Activated B cell treated with CpG ODN at 0.5 μM for 24 hours (primary cell): ENCODE measurements at regions of chr6 and their contacts with region 1.

Region 1: GRCh38 chr6:131182991-131183425 is 47.7 kb downstream of the AKAP7 start:
- DNase-seq: no peak
- ATAC-seq: peak; percentile 25
- H3K4me3 Mint-ChIP-seq: peak overlapping the region; percentile 33
- H3K27ac Mint-ChIP-seq: no peak overlapping the region
- H3K4me1 Mint-ChIP-seq: peaks cover 6% of the 10 kb centered on the region
- H3K27me3 Mint-ChIP-seq: no peaks in the 10 kb centered on the region
- CTCF ChIP-seq: no peak

Region 2: GRCh38 chr6:131013495-131013894 is 169.5 kb before region 1 on chr6:
- CTCF ChIA-PET with region 1: no interaction called
- POLR2A ChIA-PET with region 1: no interaction called
- intact Hi-C with region 1: no loop called
- DNase-seq: no peak
- ATAC-seq: no peak
- H3K4me3 Mint-ChIP-seq: no peak overlapping the region
- H3K27ac Mint-ChIP-seq: no peak overlapping the region
- H3K4me1 Mint-ChIP-seq: peaks cover 18% of the 10 kb centered on the region
- H3K27me3 Mint-ChIP-seq: no peaks in the 10 kb centered on the region
- CTCF ChIP-seq: no peak

Region 3: DNA sequence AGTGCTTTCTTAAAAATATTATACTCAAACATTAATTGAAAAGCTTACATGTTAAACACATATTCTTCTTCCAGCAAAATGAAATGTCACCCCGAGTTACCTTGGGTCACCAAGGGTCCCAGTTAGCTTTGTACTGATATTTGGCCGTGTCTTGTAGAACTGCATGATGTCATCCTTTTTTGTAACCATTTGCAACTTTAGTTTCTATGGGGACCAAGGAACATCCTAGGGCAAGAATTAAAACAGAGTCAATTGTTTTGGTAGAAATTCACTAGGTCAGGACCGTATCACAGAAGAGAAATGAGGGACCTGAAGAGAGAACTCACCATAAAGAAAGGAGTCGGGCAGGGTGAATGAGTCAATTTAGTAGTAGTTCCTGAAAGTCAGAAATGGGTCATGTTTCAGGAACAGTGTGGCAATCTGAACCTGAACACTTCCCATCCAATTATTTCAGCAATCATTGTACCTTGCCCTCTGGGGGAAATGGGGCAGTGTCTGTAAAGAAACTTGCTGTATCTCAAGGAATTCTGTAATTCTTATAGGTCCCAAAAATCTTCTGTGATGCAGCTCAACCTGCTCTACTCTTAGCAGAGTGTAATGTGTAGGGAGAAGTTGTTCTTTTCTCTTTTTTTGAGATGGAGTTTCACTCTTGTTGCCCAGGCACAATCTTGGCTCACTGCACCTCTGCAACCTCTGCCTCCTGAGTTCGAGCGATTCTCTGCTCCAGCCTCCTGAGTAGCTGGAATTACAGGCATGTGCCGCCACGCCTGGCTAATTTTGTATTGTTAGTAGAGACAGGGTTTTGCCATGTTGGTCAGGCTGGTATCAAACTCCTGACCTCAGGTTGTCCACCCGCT is 53.1 kb before region 1 on chr6:
- CTCF ChIA-PET with region 1: no interaction called
- POLR2A ChIA-PET with region 1: no interaction called
- intact Hi-C with region 1: no loop called
- DNase-seq: no peak
- ATAC-seq: no peak
- H3K4me3 Mint-ChIP-seq: no peak overlapping the region
- H3K27ac Mint-ChIP-seq: no peak overlapping the region
- H3K4me1 Mint-ChIP-seq: peaks cover 5% of the 10 kb centered on the region
- H3K27me3 Mint-ChIP-seq: no peaks in the 10 kb centered on the region
- CTCF ChIP-seq: no peak

Region 4: GRCh38 chr6:131292145-131292938 is 109.3 kb after region 1 on chr6:
- CTCF ChIA-PET with region 1: no interaction called
- POLR2A ChIA-PET with region 1: no interaction called
- intact Hi-C with region 1: no loop called
- DNase-seq: no peak
- ATAC-seq: no peak
- H3K4me3 Mint-ChIP-seq: no peak overlapping the region
- H3K27ac Mint-ChIP-seq: no peak overlapping the region
- H3K4me1 Mint-ChIP-seq: peaks cover 9% of the 10 kb centered on the region
- H3K27me3 Mint-ChIP-seq: no peaks in the 10 kb centered on the region
- CTCF ChIP-seq: no peak

Region 5: DNA sequence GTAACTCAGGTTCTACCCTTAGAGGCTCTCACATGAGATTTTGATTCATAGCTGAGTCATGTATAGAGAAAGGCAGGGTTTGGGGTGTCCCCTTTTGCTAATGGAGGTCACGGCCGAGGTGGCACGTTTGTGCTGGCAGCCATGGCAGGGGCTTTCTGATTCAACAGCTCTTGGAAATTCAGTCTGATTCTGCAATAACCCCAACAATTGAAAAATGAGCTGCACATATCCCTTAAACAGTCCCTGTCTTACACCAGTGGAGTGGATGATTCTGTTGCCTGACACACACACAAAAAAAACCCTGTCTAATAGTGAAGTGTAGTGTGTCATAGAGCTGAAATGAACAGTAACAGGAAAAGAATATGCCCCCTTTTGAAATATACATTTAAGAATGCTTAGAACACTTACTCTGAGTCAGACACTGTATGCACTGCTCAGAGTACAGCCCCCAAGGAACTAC is 349.6 kb after region 1 on chr6:
- CTCF ChIA-PET with region 1: interaction called, 22 read pairs
- POLR2A ChIA-PET with region 1: no interaction called
- intact Hi-C with region 1: loop called (anchors 1 kb)
- DNase-seq: no peak
- ATAC-seq: peak; percentile 47
- H3K4me3 Mint-ChIP-seq: no peak overlapping the region
- H3K27ac Mint-ChIP-seq: no peak overlapping the region
- H3K4me1 Mint-ChIP-seq: peaks cover 10% of the 10 kb centered on the region
- H3K27me3 Mint-ChIP-seq: no peaks in the 10 kb centered on the region
- CTCF ChIP-seq: no peak